Endothelial cell of umbilical vein (primary cell): ENCODE measurements at regions of chr3 and their contacts with region 1.

Region 1: GRCh38 chr3:23834082-23834870 is 28.5 kb downstream of the UBE2E1 start:
- DNase-seq: peak; percentile 45
- H3K4me3 ChIP-seq: no peak overlapping the region
- H3K27ac ChIP-seq: no peak overlapping the region
- H3K4me1 ChIP-seq: no peaks in the 10 kb centered on the region
- H3K27me3 ChIP-seq: no peaks in the 10 kb centered on the region
- CTCF ChIP-seq: no peak
- POLR2A ChIP-seq: no peak

Region 2: GRCh38 chr3:23800731-23801130 is 33.5 kb before region 1 on chr3:
- CTCF ChIA-PET with region 1: no interaction called
- POLR2A ChIA-PET with region 1: no interaction called
- dilution Hi-C with region 1: no loop called
- intact Hi-C with region 1: no loop called
- DNase-seq: peak; percentile 39
- H3K4me3 ChIP-seq: no peak overlapping the region
- H3K27ac ChIP-seq: no peak overlapping the region
- H3K4me1 ChIP-seq: peaks cover 2% of the 10 kb centered on the region
- H3K27me3 ChIP-seq: peaks cover 0 to 1% of the 10 kb centered on the region in 2 experiments
- CTCF ChIP-seq: no peak
- POLR2A ChIP-seq: no peak

Region 3: GRCh38 chr3:23845326-23846221 is 11.3 kb after region 1 on chr3:
- CTCF ChIA-PET with region 1: interaction called, 10 read pairs
- POLR2A ChIA-PET with region 1: no interaction called
- dilution Hi-C with region 1: no loop called
- intact Hi-C with region 1: no loop called
- DNase-seq: no peak
- H3K4me3 ChIP-seq: no peak overlapping the region
- H3K27ac ChIP-seq: no peak overlapping the region
- H3K4me1 ChIP-seq: no peaks in the 10 kb centered on the region
- H3K27me3 ChIP-seq: no peaks in the 10 kb centered on the region
- CTCF ChIP-seq: no peak
- POLR2A ChIP-seq: no peak

Region 4: DNA sequence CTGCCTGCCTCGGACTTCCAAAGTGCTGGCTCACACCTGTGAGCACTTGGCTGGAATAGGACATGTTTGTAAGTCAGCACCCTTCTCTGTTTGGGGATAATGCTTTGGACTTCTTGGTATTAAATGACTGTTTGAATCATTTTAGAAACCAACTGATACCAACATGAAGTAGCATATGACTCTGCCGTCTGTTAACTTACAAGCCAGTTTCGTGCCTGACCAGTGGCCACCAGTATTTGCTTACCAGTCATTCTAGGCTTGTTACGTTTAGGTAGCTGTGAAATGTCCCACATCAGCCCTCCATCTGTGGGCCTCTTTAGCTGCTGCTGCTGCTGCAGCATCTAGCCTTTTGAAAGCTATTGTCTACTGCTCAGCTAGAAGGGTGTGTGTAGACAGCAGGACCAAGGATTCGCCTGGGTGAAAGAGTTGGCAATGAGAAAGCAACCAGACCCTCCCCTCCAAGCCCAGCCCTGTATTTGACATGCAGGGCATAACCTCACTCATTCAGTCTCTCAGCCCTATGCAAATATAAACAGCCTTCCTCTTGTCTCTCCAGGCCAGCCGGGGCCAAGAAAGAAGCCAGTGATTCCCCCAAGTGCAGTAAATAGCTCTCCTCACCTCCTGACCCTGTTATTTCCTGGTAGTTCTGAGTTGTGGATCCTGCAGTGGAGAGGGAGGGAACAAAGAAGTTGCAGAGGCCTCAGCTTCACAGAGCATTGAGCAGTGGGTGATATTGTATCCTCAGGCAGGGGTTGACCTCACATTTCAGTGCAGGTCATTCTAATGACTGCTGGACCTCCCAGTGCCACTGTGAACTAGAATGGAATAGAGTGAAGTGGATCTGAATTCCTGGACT is 31.5 kb after region 1 on chr3:
- CTCF ChIA-PET with region 1: interaction called, 14 read pairs
- POLR2A ChIA-PET with region 1: interaction called, 5 read pairs
- dilution Hi-C with region 1: no loop called
- intact Hi-C with region 1: no loop called
- DNase-seq: peak; percentile 87
- H3K4me3 ChIP-seq: no peak overlapping the region
- H3K27ac ChIP-seq: peak overlapping the region; percentile 4
- H3K4me1 ChIP-seq: peaks cover 48% of the 10 kb centered on the region
- H3K27me3 ChIP-seq: no peaks in the 10 kb centered on the region
- CTCF ChIP-seq: no peak
- POLR2A ChIP-seq: no peak